Naive thymus-derived CD8-positive, alpha-beta T cell (primary cell): ENCODE measurements at regions of chr9 and their contacts with region 1.

Region 1: GRCh38 chr9:96034553-96035122 is 159.1 kb downstream of the ERCC6L2 start:
- DNase-seq: no peak
- ATAC-seq: no peak
- H3K4me3 Mint-ChIP-seq: no peak overlapping the region
- H3K27ac Mint-ChIP-seq: peak overlapping the region in 1 of 10 donors; percentile 78
- H3K4me1 Mint-ChIP-seq: peaks cover 6 to 30% (median 21%) of the 10 kb centered on the region in 4 donors
- H3K27me3 Mint-ChIP-seq: peaks cover 0 to under 1% (median 0%) of the 10 kb centered on the region in 5 donors

Region 2: DNA sequence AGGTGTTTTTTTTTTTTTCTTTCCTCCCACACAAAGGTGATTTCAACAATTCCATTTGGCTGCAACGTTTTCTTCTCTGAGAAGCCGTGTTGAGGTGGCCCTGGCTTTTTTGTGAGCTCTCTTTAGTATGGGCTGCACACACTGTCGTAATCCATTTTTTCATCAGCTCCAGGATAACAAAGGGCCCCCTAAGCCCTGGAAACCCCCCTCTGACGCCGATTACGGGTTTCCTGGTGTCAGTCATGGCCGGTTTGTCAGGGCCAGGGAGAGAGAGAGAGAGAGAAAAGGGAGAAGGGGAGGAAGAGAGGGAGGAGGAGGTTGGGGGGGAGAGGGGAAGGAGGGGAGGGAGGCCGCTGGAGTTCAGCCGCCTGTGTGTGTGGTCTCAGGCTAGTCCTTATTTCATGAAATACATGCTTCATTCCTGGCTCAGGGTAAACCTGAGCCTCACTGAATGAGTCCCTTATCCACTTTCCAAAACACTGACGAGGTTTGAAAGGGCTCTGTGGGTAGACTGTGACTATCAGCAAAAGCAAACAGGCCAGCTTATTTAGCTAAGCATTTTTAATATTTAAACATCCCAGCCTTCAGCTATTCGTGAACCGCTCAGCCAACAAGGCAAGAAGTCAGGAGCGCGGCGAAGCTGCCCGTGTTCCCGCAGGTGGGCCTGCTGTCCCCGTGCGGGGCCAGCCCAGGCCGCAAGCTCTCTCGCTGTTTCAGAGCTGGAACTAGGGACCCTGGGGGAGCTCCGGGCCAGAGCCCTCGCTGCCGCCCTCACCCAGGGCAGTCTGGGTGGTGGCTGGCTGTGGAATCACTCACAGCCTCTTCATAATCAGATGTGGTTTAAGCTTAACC is 13.7 kb after region 1 on chr9:
- POLR2A ChIA-PET with region 1: interaction called, 10 read pairs
- DNase-seq: peak in 6 of 10 donors; percentile 24 to 69 (median 43)
- ATAC-seq: peak; percentile 70 to 81
- H3K4me3 Mint-ChIP-seq: peak overlapping the region in 4 of 10 donors; percentile 44 to 82 (median 64)
- H3K27ac Mint-ChIP-seq: peak overlapping the region in 6 of 10 donors; percentile 34 to 83 (median 62)
- H3K4me1 Mint-ChIP-seq: peaks cover 8 to 23% (median 12%) of the 10 kb centered on the region in 4 donors
- H3K27me3 Mint-ChIP-seq: peaks cover 0 to 2% (median 0%) of the 10 kb centered on the region in 5 donors